ENCODE measurements at regions of chr19 and their contacts with region 1.

Region 1: GRCh38 chr19:58228585-58229254 is at the start of gene ZNF544:
- DNase-seq: peak; percentile 84
- H3K4me3 Mint-ChIP-seq: peak within 1 kb of the TSS; percentile 85
- H3K27ac Mint-ChIP-seq: peak within 1 kb of the TSS; percentile 92
- H3K4me1 Mint-ChIP-seq: peaks cover 8% of the 10 kb centered on the region
- H3K27me3 Mint-ChIP-seq: no peaks in the 10 kb centered on the region
- CTCF ChIP-seq: no peak
- total RNA-seq, gene ZNF544: 39.4 and 42.3 TPM in 2 replicates

Region 2: GRCh38 chr19:58278157-58279041 is 49.7 kb after region 1 on chr19 and contains the start of gene ZNF8:
- CTCF ChIA-PET with region 1: interaction called, 3 read pairs
- POLR2A ChIA-PET with region 1: interaction called, 17 read pairs
- intact Hi-C with region 1: no loop called
- DNase-seq: peak; percentile 99
- H3K4me3 Mint-ChIP-seq: peak within 1 kb of the TSS; percentile 89
- H3K27ac Mint-ChIP-seq: peak within 1 kb of the TSS; percentile 97
- H3K4me1 Mint-ChIP-seq: peaks cover 18% of the 10 kb centered on the region
- H3K27me3 Mint-ChIP-seq: no peaks in the 10 kb centered on the region
- CTCF ChIP-seq: no peak
- total RNA-seq, gene ZNF8: 4.9 and 5.1 TPM in 2 replicates

Region 3: GRCh38 chr19:58305065-58305931 is 76.6 kb after region 1 on chr19 and contains the start of gene ERVK3-1:
- CTCF ChIA-PET with region 1: interaction called, 5 read pairs
- POLR2A ChIA-PET with region 1: interaction called, 9 read pairs
- intact Hi-C with region 1: loop called (anchors 2 kb)
- DNase-seq: peak; percentile 97
- H3K4me3 Mint-ChIP-seq: peak within 1 kb of the TSS; percentile 96
- H3K27ac Mint-ChIP-seq: peak within 1 kb of the TSS; percentile 98
- H3K4me1 Mint-ChIP-seq: peaks cover 10% of the 10 kb centered on the region
- H3K27me3 Mint-ChIP-seq: no peaks in the 10 kb centered on the region
- CTCF ChIP-seq: no peak
- total RNA-seq, gene ERVK3-1: 63.1 and 64.6 TPM in 2 replicates

Region 4: DNA sequence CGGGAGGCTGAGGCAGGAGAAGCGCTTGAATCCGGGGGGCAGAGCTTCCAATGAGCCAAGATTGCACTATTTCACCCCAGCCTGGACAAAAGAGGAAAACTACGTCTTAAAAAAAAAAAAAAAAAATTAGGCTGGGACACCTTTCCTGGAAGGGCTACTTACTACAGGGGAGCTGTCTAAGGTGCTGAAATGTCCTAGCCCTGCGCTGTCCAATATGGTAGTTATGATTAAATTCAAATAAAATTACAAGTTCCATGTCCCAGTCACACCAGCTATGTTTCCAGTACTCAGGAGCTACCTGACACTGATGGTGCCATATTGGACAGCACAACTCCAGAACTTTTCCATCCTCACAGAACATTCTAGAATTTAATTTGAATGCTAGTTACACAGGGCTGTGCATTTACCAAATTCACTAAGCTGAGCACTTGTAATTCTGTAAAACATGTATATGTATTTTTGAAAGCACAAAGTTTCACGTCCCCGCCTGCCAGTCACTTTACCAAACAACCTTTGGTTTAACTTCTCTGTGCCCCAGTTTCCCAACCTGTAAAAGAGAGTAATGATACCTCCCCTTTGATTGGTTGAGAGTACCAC is 88.9 kb after region 1 on chr19:
- CTCF ChIA-PET with region 1: no interaction called
- POLR2A ChIA-PET with region 1: no interaction called
- intact Hi-C with region 1: no loop called
- DNase-seq: peak; percentile 54
- H3K4me3 Mint-ChIP-seq: no peak overlapping the region
- H3K27ac Mint-ChIP-seq: no peak overlapping the region
- H3K4me1 Mint-ChIP-seq: no peaks in the 10 kb centered on the region
- H3K27me3 Mint-ChIP-seq: no peaks in the 10 kb centered on the region
- CTCF ChIP-seq: no peak

Region 5: GRCh38 chr19:58386576-58387337 is 158.0 kb after region 1 on chr19 and contains the start of gene RPS5:
- CTCF ChIA-PET with region 1: no interaction called
- POLR2A ChIA-PET with region 1: no interaction called
- intact Hi-C with region 1: loop called (anchors 5 kb)
- DNase-seq: peak; percentile 100
- H3K4me3 Mint-ChIP-seq: peak within 1 kb of the TSS; percentile 92
- H3K27ac Mint-ChIP-seq: peak within 1 kb of the TSS; percentile 98
- H3K4me1 Mint-ChIP-seq: peaks cover 18% of the 10 kb centered on the region
- H3K27me3 Mint-ChIP-seq: no peaks in the 10 kb centered on the region
- CTCF ChIP-seq: no peak
- total RNA-seq, gene RPS5: 1,779 and 1,872 TPM in 2 replicates

Measured in MCF 10A (cell line).